Right ventricle myocardium superior (tissue), 1 donor: ENCODE measurements at regions of chr1 and their contacts with region 1.

Region 1: GRCh38 chr1:18956369-18957135 is at the start of gene IFFO2:
- DNase-seq: peak; percentile 99
- ATAC-seq: peak; percentile 98
- total RNA-seq, gene IFFO2: 4.4 TPM

Region 2: DNA sequence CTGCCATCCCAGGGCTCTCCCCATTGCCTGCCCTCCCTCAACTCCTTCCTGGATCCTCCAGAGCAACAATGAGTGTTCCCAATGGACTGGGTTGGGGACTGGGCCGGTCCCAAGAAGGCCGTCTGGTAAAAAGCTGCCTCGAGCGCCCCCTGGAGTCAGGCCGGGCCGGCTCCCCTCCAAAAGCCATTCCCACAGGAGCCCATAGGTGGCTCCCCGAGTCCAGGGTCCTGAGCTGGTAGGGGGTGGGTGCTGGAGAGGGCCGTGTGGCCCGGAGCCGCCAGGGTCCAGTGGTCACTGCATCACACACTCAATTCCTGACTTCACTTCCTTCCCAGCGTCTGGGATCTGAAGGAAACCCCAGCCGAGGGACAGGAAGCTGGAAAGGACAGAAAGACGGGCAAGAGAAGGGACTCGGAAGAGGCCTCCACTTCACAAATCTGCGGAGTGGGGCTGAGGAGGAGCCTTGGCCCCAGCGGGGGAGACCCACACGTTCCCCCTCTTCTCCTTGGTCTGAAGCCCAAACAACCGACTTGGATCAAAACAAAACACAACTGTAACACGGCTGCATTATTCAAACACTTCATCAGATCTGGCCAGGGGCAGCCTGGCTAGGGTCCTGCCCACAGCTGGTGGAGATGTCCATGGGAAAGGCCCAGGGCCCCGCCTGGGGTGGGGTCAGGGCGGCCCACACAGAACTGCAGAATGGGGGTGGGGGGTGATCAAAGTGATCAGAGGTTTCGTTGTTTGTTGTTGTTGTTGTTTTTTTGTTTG is 43.3 kb before region 1 on chr1:
- intact Hi-C with region 1: loop called (anchors 5 kb)
- DNase-seq: peak; percentile 91
- ATAC-seq: peak; percentile 89